OCI-LY7 (cell line): ENCODE measurements at regions of chr9 and their contacts with region 1.

Region 1: GRCh38 chr9:131762356-131762932 is 22.6 kb upstream of the RAPGEF1 start:
- DNase-seq: peak; percentile 75
- H3K4me3 ChIP-seq: no peak overlapping the region
- H3K27ac ChIP-seq: no peak overlapping the region
- H3K4me1 ChIP-seq: peaks cover 21% of the 10 kb centered on the region
- CTCF ChIP-seq: peak; percentile 88

Region 2: DNA sequence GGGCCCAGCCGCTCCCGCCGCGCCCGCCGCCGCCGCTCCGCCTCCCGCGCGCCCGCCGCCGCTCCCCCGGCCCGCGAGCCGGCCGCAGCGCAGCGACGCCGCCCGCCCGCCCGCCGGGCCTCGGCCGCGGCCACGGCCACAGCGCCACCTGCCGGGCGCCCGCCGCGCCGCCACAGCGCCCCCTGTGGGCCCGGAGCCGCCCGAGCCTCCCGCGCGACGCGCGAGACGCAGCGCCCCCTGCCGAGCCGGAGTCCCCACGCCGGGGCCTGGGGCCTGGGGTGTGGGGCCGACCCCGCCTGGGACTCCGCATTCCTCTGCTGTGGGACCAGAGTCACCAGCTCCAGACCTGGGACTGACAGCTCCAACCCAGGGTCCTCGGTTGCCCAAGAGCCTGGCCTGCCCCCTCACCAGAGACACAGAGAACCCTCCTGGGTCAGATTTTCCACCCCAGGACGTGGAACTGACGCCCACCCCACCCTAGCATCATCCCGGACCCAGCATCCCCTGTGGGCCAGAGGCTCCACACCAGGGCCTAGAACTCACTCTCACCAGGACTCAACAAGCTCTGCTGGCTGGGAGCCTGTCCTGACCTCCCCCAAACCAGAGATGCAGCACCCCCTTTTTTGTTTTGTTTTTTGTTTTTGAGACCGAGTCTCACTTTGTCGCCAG is 22.3 kb before region 1 on chr9 and contains the start of gene RAPGEF1:
- CTCF ChIA-PET with region 1: no interaction called
- POLR2A ChIA-PET with region 1: no interaction called
- intact Hi-C with region 1: no loop called
- DNase-seq: peak; percentile 84
- H3K4me3 ChIP-seq: peak within 1 kb of the TSS; percentile 81
- H3K27ac ChIP-seq: peak within 1 kb of the TSS; percentile 100
- H3K4me1 ChIP-seq: peaks cover 70% of the 10 kb centered on the region
- CTCF ChIP-seq: peak; percentile 82
- total RNA-seq, gene RAPGEF1: 114 and 118 TPM in 2 replicates

Region 3: DNA sequence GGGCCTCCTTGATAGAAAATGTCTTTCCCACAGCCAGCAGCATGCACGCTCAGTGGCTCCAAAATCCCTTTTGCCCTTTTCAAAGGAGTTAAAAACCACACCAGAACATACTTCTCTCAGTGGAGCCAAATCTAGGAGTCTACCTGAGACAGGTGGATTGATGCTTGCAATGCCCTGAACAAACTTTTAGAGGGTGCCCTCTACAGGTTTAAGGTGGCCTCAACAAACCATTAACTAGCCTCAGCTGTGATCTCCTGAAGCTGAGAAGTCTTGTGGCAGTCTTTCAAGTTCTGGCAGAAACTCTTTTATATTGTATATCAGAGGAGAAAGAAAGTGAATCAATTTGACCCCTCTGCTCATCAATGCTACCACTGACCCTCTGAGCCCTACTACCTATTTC is 191.9 kb after region 1 on chr9:
- CTCF ChIA-PET with region 1: no interaction called
- POLR2A ChIA-PET with region 1: no interaction called
- intact Hi-C with region 1: loop called (anchors 10 kb)
- DNase-seq: peak; percentile 20
- H3K4me3 ChIP-seq: no peak overlapping the region
- H3K27ac ChIP-seq: no peak overlapping the region
- H3K4me1 ChIP-seq: no peaks in the 10 kb centered on the region
- CTCF ChIP-seq: peak; percentile 76

Region 4: GRCh38 chr9:132169672-132170392 is 407.4 kb after region 1 on chr9:
- CTCF ChIA-PET with region 1: no interaction called
- POLR2A ChIA-PET with region 1: no interaction called
- intact Hi-C with region 1: loop called (anchors 10 kb)
- DNase-seq: peak; percentile 74
- H3K4me3 ChIP-seq: no peak overlapping the region
- H3K27ac ChIP-seq: no peak overlapping the region
- H3K4me1 ChIP-seq: no peaks in the 10 kb centered on the region
- CTCF ChIP-seq: peak; percentile 93

Region 5: GRCh38 chr9:132235946-132236661 is 473.7 kb after region 1 on chr9:
- CTCF ChIA-PET with region 1: no interaction called
- POLR2A ChIA-PET with region 1: no interaction called
- intact Hi-C with region 1: loop called (anchors 1 kb)
- DNase-seq: peak; percentile 78
- H3K4me3 ChIP-seq: no peak overlapping the region
- H3K27ac ChIP-seq: no peak overlapping the region
- H3K4me1 ChIP-seq: no peaks in the 10 kb centered on the region
- CTCF ChIP-seq: peak; percentile 95

Region 6: DNA sequence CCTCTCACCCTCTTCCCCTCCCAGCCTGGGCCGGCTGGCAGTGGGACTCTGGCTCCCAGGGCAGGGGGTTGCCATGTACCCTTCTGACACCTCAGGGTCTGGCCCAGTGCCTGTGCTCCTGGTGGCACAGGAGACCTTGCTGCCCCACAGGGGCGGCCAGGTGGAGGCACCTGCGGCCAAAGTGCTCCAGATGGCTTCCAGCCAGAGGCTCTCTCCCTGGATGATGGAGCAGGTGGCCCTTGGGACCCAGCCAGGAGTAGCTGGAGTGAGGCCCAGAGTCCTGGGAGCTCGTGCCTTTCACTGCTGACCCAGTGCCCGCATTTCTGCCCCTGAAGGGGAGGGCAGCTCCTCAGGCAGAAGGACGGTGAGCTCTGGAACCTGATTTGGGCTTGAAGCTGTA is 486.7 kb after region 1 on chr9:
- CTCF ChIA-PET with region 1: interaction called, 3 read pairs
- POLR2A ChIA-PET with region 1: no interaction called
- intact Hi-C with region 1: loop called (anchors 1 kb)
- DNase-seq: no peak
- H3K4me3 ChIP-seq: no peak overlapping the region
- H3K27ac ChIP-seq: no peak overlapping the region
- H3K4me1 ChIP-seq: no peaks in the 10 kb centered on the region
- CTCF ChIP-seq: no peak